CD4-positive, alpha-beta memory T cell (primary cell): ENCODE measurements at regions of chr3 and their contacts with region 1.

Region 1: DNA sequence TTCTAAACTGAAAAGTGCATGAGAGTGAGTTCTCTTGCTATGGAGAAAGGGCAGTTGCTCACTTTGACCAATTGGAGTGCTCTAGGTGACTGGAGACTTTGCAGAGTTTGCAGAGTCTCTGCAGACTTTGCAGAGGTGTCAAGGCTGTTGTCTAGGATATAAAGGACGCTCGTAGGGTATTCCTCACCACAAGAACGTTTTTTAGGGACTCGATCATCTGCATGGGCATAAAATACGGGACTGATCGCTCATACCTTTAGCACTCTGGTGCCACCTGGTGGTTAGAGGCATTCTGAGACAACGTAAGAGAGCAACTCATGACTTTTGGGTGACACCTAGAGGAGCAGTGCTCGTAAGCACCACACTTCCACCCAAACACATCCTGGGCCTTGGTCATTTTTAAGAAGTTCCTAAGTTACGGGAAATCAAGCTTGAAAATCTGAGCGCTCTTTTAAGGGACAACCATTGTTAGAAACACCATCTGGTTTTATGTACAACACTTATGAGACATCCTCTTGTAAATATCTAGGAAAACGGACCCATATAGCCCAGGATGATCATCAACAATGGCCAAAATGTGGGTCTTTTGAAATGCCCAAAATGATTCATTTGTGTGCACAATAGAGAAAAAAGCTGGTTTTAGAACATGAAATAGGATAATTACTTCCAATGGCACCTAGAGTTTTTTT is 51.6 kb upstream of the XCR1 start:
- DNase-seq: peak; percentile 85 to 88 (median 86)
- H3K4me3 ChIP-seq: no peak overlapping the region
- H3K4me3 Mint-ChIP-seq: peak overlapping the region in 4 of 8 donors; percentile 3 to 70 (median 51)
- H3K27ac ChIP-seq: no peak overlapping the region
- H3K27ac Mint-ChIP-seq: peak overlapping the region in 2 of 7 donors; percentile 15 to 16
- H3K4me1 ChIP-seq: peaks cover 3% of the 10 kb centered on the region
- H3K4me1 Mint-ChIP-seq: peaks cover 6 to 9% (median 8%) of the 10 kb centered on the region in 4 donors
- H3K27me3 ChIP-seq: no peaks in the 10 kb centered on the region
- H3K27me3 Mint-ChIP-seq: no peaks in the 10 kb centered on the region

Region 2: DNA sequence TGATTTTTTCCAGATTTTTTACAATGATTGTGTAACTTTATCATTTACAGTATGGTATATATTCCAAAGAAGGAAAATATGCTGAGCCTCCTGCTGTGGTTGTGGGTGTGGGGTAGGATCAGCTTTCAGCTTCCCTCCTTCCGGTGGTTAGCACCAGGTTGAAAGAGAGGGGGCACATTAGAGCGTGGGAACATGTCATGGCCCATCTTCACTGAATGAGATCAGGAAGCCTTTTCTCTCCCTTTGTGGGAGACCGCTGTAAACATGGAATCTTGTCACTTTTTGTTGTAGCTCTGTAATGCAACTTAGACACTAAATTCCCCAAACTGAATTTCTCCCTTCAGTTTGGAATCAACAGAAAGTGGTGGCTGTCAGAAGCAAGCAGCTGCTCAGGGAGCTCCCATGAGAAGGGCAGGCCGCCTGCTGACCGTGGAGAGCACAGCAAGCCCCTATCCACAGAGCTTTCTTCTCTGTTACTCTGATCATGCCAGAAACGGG is 571.0 kb before region 1 on chr3:
- CTCF ChIA-PET with region 1: interaction called, 6 read pairs
- POLR2A ChIA-PET with region 1: no interaction called
- intact Hi-C with region 1: loop called (anchors 1 kb)
- DNase-seq: no peak
- H3K4me3 ChIP-seq: no peak overlapping the region
- H3K4me3 Mint-ChIP-seq: no peak overlapping the region
- H3K27ac ChIP-seq: no peak overlapping the region
- H3K27ac Mint-ChIP-seq: no peak overlapping the region
- H3K4me1 ChIP-seq: peaks cover 10% of the 10 kb centered on the region
- H3K4me1 Mint-ChIP-seq: peaks cover 0 to 4% (median 2%) of the 10 kb centered on the region in 4 donors
- H3K27me3 ChIP-seq: no peaks in the 10 kb centered on the region
- H3K27me3 Mint-ChIP-seq: no peaks in the 10 kb centered on the region

Region 3: GRCh38 chr3:45665101-45665572 is 413.7 kb before region 1 on chr3:
- CTCF ChIA-PET with region 1: interaction called, 10 read pairs
- POLR2A ChIA-PET with region 1: no interaction called
- intact Hi-C with region 1: loop called (anchors 2 kb)
- DNase-seq: peak; percentile 76 to 84 (median 79)
- H3K4me3 ChIP-seq: peak overlapping the region; percentile 70
- H3K4me3 Mint-ChIP-seq: peak overlapping the region; percentile 87 to 98 (median 92)
- H3K27ac ChIP-seq: peak overlapping the region; percentile 66
- H3K27ac Mint-ChIP-seq: peak overlapping the region; percentile 89 to 98 (median 95)
- H3K4me1 ChIP-seq: peaks cover 22% of the 10 kb centered on the region
- H3K4me1 Mint-ChIP-seq: peaks cover 15 to 36% (median 25%) of the 10 kb centered on the region in 4 donors
- H3K27me3 ChIP-seq: no peaks in the 10 kb centered on the region
- H3K27me3 Mint-ChIP-seq: no peaks in the 10 kb centered on the region

Region 4: DNA sequence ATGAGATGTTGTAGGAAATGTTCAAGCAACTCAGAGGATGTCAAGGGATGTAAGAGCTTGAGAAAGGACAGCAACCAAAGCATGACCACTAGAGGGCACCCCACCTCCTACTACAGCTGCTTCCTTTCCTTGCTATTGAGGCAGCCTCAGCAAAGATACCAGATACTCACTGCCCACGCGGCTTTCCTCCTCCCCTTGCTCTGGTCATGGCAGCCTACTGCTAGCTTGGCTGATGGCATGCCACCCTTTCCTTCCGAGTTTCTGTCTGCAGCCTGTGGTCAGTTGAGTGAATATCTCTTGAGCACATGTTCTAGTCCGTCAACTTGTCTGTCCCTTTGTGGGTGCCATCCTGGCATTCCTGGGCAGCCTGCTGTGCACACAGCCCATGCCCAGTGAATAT is 140.0 kb before region 1 on chr3:
- CTCF ChIA-PET with region 1: interaction called, 677 read pairs
- POLR2A ChIA-PET with region 1: interaction called, 57 read pairs
- intact Hi-C with region 1: loop called (anchors 1 kb)
- DNase-seq: peak; percentile 79 to 83 (median 80)
- H3K4me3 ChIP-seq: no peak overlapping the region
- H3K4me3 Mint-ChIP-seq: peak overlapping the region in 1 of 8 donors; percentile 14
- H3K27ac ChIP-seq: no peak overlapping the region
- H3K27ac Mint-ChIP-seq: peak overlapping the region in 3 of 7 donors; percentile 16 to 82 (median 77)
- H3K4me1 ChIP-seq: peaks cover 43% of the 10 kb centered on the region
- H3K4me1 Mint-ChIP-seq: peaks cover 27 to 52% (median 42%) of the 10 kb centered on the region in 4 donors
- H3K27me3 ChIP-seq: no peaks in the 10 kb centered on the region
- H3K27me3 Mint-ChIP-seq: no peaks in the 10 kb centered on the region

Region 5: DNA sequence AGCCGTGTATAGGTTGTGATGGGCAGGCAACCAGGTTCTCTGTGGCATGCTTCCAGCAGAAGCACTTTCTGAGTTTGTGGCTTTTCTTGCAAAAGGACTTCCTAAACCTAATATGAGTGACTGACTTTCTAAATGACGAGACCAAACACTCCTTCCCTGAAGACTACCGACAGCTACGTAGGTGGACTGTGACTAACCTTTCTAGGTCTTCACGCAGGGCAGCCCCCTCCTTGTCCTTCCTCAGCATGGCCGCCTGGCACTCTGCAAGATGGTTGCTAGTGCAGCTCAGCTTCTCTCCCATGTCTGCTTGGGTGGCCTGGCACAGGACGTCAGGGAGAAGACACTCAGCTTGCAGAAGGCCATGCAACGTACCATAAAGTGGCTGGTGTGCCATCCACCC is 114.7 kb before region 1 on chr3:
- CTCF ChIA-PET with region 1: interaction called, 153 read pairs
- POLR2A ChIA-PET with region 1: interaction called, 16 read pairs
- intact Hi-C with region 1: loop called (anchors 1 kb)
- DNase-seq: peak in 1 of 5 donors; percentile 60
- H3K4me3 ChIP-seq: no peak overlapping the region
- H3K4me3 Mint-ChIP-seq: peak overlapping the region in 6 of 8 donors; percentile 11 to 73 (median 38)
- H3K27ac ChIP-seq: peak overlapping the region; percentile 26
- H3K27ac Mint-ChIP-seq: peak overlapping the region; percentile 41 to 88 (median 75)
- H3K4me1 ChIP-seq: peaks cover 64% of the 10 kb centered on the region
- H3K4me1 Mint-ChIP-seq: peaks cover 35 to 81% (median 61%) of the 10 kb centered on the region in 4 donors
- H3K27me3 ChIP-seq: no peaks in the 10 kb centered on the region
- H3K27me3 Mint-ChIP-seq: no peaks in the 10 kb centered on the region

Region 6: DNA sequence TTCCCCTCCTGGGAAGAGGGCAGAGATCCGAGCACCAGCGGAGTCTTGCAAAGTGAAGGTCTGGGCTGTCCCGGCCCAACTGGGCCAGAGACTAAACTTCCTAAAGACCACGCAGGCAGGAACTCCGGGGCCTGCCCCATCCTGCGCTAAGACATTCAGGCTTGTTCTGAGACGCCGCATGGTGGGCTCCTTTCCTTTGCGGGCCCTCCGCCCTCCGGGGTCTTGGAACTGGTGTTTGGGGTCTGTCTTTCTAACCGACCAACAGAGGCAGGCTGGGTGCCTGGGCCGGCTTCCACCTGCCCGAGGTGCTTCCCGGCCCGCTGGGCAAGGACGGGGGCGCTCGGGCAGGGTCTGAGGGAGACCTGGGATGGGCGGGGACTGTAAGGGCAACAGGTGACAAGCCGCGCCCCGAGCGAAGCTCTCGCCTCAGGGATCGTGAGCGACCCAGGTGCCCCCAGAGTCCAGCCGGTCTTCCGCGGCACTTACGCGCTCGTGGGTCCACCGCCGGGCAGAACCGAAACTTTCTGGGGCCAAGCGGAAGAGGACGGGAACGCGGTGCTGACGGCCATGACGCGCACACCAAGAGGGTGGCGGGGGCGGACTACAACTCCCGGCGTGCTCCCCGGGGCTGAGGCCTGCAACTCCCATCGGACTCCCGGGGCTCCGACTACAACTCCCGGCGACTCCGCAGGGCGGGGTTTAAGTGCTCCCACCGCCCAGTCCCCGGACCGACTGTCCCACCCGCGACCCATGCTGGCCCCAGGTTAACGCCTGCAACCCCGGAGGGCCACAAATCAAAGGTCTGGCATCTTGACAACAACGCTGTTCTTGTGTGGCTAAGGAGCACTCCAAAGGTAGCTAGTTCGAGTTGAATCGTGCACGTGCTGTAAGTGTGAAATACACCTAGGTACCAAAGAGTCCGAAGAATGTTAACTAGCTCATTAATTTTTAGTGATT is 83.3 kb before region 1 on chr3 and contains the start of gene FYCO1:
- CTCF ChIA-PET with region 1: interaction called, 50 read pairs
- POLR2A ChIA-PET with region 1: interaction called, 14 read pairs
- intact Hi-C with region 1: no loop called
- DNase-seq: peak; percentile 84 to 88 (median 85)
- H3K4me3 ChIP-seq: peak within 1 kb of the TSS; percentile 75 to 93
- H3K4me3 Mint-ChIP-seq: peak within 1 kb of the TSS; percentile 83 to 95 (median 92)
- H3K27ac ChIP-seq: peak within 1 kb of the TSS; percentile 95
- H3K27ac Mint-ChIP-seq: peak within 1 kb of the TSS; percentile 88 to 95 (median 94)
- H3K4me1 ChIP-seq: peaks cover 47% of the 10 kb centered on the region
- H3K4me1 Mint-ChIP-seq: peaks cover 32 to 59% (median 37%) of the 10 kb centered on the region in 4 donors
- H3K27me3 ChIP-seq: no peaks in the 10 kb centered on the region
- H3K27me3 Mint-ChIP-seq: no peaks in the 10 kb centered on the region
- total RNA-seq, gene FYCO1: 42.5 to 43.3 TPM

Region 7: DNA sequence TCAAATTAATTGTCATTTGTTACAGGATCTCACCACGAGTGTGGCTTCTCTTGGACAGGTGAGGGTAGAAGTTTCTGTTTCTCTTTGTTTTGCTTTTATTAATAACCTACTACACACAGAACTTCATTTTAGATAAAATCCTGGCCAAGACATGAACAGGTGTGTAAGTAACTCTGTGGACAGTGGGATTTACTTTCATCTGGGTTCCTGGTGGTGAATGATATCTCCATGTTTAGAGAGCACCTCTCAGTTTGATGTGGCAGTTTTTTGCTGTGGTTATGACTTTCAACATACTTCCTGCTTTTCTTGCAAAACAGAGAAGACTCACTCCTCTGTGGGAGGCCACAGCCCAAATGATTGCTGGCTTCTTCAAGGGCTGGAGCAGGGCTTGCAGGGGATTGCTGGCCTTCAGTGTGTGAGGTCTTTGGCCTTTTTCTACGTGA is 19.5 kb after region 1 on chr3:
- CTCF ChIA-PET with region 1: interaction called, 25 read pairs
- POLR2A ChIA-PET with region 1: interaction called, 3 read pairs
- intact Hi-C with region 1: no loop called
- DNase-seq: peak; percentile 41 to 58 (median 50)
- H3K4me3 ChIP-seq: no peak overlapping the region
- H3K4me3 Mint-ChIP-seq: peak overlapping the region in 7 of 8 donors; percentile 7 to 83 (median 71)
- H3K27ac ChIP-seq: peak overlapping the region; percentile 35
- H3K27ac Mint-ChIP-seq: peak overlapping the region; percentile 78 to 93 (median 90)
- H3K4me1 ChIP-seq: peaks cover 39% of the 10 kb centered on the region
- H3K4me1 Mint-ChIP-seq: peaks cover 24 to 47% (median 38%) of the 10 kb centered on the region in 4 donors
- H3K27me3 ChIP-seq: no peaks in the 10 kb centered on the region
- H3K27me3 Mint-ChIP-seq: no peaks in the 10 kb centered on the region